Gastrocnemius medialis (tissue), 4 donors: ENCODE measurements at regions of chr6 and their contacts with region 1.

Region 1: DNA sequence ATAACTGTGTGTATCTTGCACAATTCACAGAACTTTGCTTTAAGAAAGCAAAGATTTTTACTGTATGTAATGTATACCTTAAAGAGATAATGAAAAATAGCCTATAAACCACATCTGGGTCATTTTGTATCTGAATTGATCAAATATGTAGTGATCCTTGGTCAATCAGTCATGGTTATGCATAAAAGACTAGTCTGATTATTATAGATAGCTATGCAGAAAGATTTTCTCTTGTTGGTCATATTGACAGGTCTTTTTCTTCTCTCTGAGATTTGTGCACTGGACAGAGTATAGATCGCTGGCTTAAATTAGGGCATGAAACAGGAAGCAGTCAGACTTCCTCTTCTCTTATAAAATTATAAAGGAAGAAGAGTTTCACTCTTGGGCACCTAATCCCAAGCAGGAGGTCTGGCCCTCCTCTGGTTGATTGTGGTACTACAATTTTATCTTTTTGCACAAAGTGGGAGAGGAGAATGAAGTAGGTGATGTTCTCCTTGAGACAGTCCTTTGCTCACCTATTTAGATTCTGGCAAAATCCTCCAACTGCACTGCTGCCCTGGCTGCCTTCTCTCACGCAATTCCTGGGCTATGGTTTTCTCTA is 380.9 kb upstream of the RGS17 start:
- DNase-seq: no peak
- ATAC-seq: no peak
- H3K4me3 ChIP-seq: no peak overlapping the region
- H3K27ac ChIP-seq: no peak overlapping the region
- H3K4me1 ChIP-seq: no peaks in the 10 kb centered on the region
- H3K27me3 ChIP-seq: no peaks in the 10 kb centered on the region
- CTCF ChIP-seq: peak in 3 of 5 experiments; percentile 26 to 47 (median 37)
- POLR2A ChIP-seq: no peak

Region 2: DNA sequence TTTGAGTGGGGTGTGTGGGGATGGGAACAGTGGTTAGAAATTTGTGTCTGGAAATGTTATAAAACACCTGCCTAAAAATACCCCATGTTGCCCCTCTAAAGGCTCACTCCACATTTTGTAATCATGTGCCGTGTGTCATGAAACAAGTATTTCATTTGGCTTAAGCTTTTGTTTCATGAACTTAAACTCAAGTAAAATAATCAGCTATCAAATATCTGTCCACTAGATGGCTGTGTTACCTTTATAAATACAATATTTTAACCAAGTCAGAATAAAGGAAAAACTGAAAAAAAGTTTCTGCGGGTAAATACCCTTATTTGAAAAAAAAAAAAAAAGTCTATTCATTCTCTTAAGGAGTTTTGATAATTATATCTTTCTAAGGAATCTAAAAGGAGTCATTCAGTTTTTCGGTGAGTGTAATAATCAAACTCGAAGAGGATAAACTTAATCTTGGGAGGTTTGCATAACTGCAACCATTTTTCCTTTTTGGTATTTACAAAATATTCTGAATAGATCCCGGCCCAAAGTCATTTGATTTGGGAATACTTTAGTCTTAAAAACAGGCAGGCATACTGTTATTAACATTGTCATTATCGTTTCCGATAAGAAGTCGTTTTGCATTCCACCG is 479.6 kb before region 1 on chr6:
- in situ Hi-C with region 1: loop called in 2 of 4 experiments (anchors 10 to 25 kb)
- intact Hi-C with region 1: loop called (anchors 5 kb)
- DNase-seq: no peak
- ATAC-seq: no peak
- H3K4me3 ChIP-seq: no peak overlapping the region
- H3K27ac ChIP-seq: no peak overlapping the region
- H3K4me1 ChIP-seq: no peaks in the 10 kb centered on the region
- H3K27me3 ChIP-seq: no peaks in the 10 kb centered on the region
- CTCF ChIP-seq: peak in 2 of 5 experiments; percentile 14 to 39
- POLR2A ChIP-seq: no peak

Region 3: DNA sequence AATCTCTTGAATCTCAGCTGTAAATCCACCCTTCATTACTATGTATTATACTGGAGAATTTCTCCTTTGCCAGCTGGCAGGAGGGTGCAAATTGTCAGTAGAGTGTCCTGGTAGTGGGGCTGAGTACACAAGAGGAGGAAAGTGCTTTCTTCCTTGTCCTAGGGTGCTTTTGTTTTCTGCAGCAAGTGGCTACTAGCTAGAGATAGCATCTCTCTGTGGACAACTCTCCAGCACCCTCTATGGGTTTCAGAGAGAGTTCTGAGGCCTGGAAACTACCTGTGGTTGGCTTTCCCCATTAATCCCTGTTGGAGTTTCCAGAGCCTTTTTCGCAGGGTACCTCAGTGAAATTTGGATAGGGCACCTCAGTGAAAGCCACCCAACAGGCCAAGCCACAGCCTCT is 41.6 kb after region 1 on chr6:
- in situ Hi-C with region 1: no loop called
- intact Hi-C with region 1: no loop called
- DNase-seq: no peak
- ATAC-seq: no peak
- H3K4me3 ChIP-seq: no peak overlapping the region
- H3K27ac ChIP-seq: no peak overlapping the region
- H3K4me1 ChIP-seq: no peaks in the 10 kb centered on the region
- H3K27me3 ChIP-seq: no peaks in the 10 kb centered on the region
- CTCF ChIP-seq: no peak
- POLR2A ChIP-seq: no peak

Region 4: GRCh38 chr6:153727885-153728284 is 215.9 kb after region 1 on chr6:
- in situ Hi-C with region 1: no loop called
- intact Hi-C with region 1: no loop called
- DNase-seq: no peak
- ATAC-seq: no peak
- H3K4me3 ChIP-seq: no peak overlapping the region
- H3K27ac ChIP-seq: no peak overlapping the region
- H3K4me1 ChIP-seq: no peaks in the 10 kb centered on the region
- H3K27me3 ChIP-seq: no peaks in the 10 kb centered on the region
- CTCF ChIP-seq: no peak
- POLR2A ChIP-seq: no peak